ENCODE measurements at regions of chr7 and their contacts with region 1.

Region 1: DNA sequence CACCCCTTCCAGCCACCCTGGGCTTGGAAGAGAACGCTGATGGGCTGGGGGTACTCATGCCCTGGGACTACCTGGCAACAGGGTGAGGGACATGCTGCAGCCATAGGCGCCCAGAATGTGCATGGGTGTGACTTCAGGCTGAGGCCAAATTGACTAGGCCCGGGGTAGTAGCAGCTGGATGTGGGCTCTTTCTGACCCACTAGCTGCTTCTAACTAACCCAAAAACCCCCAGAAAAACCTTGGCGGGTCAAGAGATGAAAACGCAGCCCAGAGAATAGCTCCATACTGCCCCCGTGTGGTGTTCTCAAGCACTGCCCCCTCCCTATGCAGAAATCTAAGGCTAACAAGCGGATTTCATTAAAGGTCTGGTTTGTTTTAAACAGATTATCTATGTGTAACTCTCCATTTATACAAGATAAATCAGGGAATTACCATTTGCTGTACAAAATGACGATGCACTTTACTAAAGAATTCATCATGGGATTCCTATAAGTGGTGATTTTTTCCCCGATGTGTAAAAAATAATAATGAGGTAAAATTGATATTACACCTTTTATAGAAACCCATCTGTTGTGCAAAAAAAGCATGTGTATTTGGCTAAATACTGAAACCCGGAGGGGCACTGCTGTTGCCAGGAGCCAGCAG is 4.2 kb downstream of the SMARCD3 start:
- DNase-seq: peak; percentile 69
- H3K4me3 Mint-ChIP-seq: peak overlapping the region; percentile 67
- H3K27ac Mint-ChIP-seq: peak overlapping the region; percentile 98
- H3K4me1 Mint-ChIP-seq: peaks cover 41% of the 10 kb centered on the region
- H3K27me3 Mint-ChIP-seq: peaks cover 34% of the 10 kb centered on the region

Region 2: GRCh38 chr7:150553163-150553562 is 691.2 kb before region 1 on chr7:
- CTCF ChIA-PET with region 1: no interaction called
- POLR2A ChIA-PET with region 1: no interaction called
- DNase-seq: no peak
- H3K4me3 Mint-ChIP-seq: no peak overlapping the region
- H3K27ac Mint-ChIP-seq: no peak overlapping the region
- H3K4me1 Mint-ChIP-seq: peaks cover 53% of the 10 kb centered on the region
- H3K27me3 Mint-ChIP-seq: no peaks in the 10 kb centered on the region

Region 3: DNA sequence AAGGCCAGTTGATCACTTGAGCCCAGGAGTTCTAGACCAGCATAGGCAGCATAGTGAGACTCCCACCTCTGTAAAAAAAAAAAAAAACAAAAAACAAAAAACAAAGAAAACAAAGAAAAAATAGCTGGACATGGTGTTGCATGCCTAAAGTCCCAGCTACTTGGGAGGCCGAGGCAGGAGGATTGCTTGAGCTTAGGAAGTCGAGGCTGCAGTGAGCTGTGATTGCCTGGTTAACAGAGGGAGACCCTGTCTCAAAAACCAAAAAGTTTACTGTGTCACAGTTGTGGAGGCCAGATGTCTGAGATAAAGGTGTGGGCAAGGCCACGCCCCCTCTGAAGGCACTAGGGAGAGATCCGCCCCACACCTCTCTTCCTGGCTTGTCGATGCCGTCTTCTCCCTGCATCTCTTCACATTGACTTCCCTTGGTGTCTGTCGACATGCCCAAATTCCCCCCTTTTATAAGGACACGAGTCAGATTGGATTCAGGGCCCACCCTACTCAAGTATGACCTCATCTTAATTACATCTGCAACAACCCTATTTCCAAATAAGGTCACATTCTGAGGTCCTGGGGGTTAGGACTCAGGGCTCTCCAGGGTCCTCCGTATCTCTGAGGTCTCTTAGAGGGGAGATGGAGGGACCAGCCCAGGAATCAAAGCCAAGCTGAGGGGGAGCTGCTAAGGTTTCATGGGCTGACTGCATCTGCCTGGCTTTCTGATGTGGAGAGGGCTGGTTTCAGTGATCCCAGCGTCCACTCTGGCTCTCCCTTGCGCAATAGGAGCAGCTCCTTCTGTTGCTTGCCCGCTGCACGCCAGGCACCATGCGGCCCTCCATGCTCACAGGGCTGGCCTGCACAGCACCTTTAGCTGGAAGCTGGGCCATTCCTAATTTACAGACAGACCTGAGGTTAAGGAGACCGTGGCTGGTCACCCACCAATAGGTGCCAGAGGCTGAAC is 134.9 kb before region 1 on chr7:
- CTCF ChIA-PET with region 1: no interaction called
- POLR2A ChIA-PET with region 1: no interaction called
- DNase-seq: no peak
- H3K4me3 Mint-ChIP-seq: no peak overlapping the region
- H3K27ac Mint-ChIP-seq: peak overlapping the region; percentile 13
- H3K4me1 Mint-ChIP-seq: no peaks in the 10 kb centered on the region
- H3K27me3 Mint-ChIP-seq: no peaks in the 10 kb centered on the region

Region 4: GRCh38 chr7:151226875-151227782 is 17.2 kb before region 1 on chr7 and contains the start of gene ABCF2:
- CTCF ChIA-PET with region 1: interaction called, 32 read pairs
- POLR2A ChIA-PET with region 1: no interaction called
- DNase-seq: peak; percentile 99
- H3K4me3 Mint-ChIP-seq: peak within 1 kb of the TSS; percentile 99
- H3K27ac Mint-ChIP-seq: peak within 1 kb of the TSS; percentile 95
- H3K4me1 Mint-ChIP-seq: peaks cover 51% of the 10 kb centered on the region
- H3K27me3 Mint-ChIP-seq: no peaks in the 10 kb centered on the region
- total RNA-seq, gene ABCF2: 31.7 to 34.3 TPM

Region 5: GRCh38 chr7:151232091-151232916 is 12.0 kb before region 1 on chr7 and contains the start of gene CHPF2:
- CTCF ChIA-PET with region 1: interaction called, 32 read pairs
- POLR2A ChIA-PET with region 1: no interaction called
- DNase-seq: peak; percentile 93
- H3K4me3 Mint-ChIP-seq: peak within 1 kb of the TSS; percentile 99
- H3K27ac Mint-ChIP-seq: peak within 1 kb of the TSS; percentile 98
- H3K4me1 Mint-ChIP-seq: peaks cover 36% of the 10 kb centered on the region
- H3K27me3 Mint-ChIP-seq: no peaks in the 10 kb centered on the region
- total RNA-seq, gene CHPF2: 40.7 to 42.3 TPM

Region 6: GRCh38 chr7:151256410-151257045 is 12.2 kb after region 1 on chr7:
- CTCF ChIA-PET with region 1: interaction called, 40 read pairs
- POLR2A ChIA-PET with region 1: no interaction called
- DNase-seq: no peak
- H3K4me3 Mint-ChIP-seq: no peak overlapping the region
- H3K27ac Mint-ChIP-seq: no peak overlapping the region
- H3K4me1 Mint-ChIP-seq: peaks cover 3% of the 10 kb centered on the region
- H3K27me3 Mint-ChIP-seq: peaks cover 30% of the 10 kb centered on the region

Measured in activated CD4-positive, alpha-beta T cell treated with anti-CD3 and anti-CD28 coated beads, Interleukin-2, amount 10 ng/mL, durations not matched to agents 7 days and 5 days (primary cell).